MCF 10A (cell line): ENCODE measurements at regions of chr16 and their contacts with region 1.

Region 1: DNA sequence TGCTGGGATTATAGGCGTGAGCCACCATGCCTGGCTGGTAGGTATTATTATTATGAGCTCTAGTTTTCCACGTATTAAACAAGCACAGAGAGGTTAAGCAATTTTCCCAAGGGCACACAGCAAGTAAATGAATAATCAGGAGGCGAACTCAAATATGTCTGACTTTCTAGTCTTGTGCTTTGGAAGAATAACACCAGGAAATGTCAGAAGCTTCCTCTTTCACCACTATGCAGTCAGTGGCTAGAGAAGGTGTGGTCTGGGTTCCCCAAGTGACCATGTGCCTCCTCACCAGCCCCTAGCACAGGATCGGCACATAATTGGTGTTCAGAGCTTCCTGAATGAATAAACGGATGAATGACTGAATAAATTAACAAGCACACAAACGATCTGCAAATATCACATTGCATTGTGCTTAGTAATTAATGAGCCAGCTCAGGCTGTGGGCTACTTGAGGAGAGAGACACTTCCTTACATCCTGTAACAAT is 21.6 kb upstream of the SCNN1B start:
- DNase-seq: no peak
- H3K4me3 Mint-ChIP-seq: no peak overlapping the region
- H3K27ac Mint-ChIP-seq: no peak overlapping the region
- H3K4me1 Mint-ChIP-seq: peaks cover 37% of the 10 kb centered on the region
- H3K27me3 Mint-ChIP-seq: no peaks in the 10 kb centered on the region
- CTCF ChIP-seq: no peak

Region 2: DNA sequence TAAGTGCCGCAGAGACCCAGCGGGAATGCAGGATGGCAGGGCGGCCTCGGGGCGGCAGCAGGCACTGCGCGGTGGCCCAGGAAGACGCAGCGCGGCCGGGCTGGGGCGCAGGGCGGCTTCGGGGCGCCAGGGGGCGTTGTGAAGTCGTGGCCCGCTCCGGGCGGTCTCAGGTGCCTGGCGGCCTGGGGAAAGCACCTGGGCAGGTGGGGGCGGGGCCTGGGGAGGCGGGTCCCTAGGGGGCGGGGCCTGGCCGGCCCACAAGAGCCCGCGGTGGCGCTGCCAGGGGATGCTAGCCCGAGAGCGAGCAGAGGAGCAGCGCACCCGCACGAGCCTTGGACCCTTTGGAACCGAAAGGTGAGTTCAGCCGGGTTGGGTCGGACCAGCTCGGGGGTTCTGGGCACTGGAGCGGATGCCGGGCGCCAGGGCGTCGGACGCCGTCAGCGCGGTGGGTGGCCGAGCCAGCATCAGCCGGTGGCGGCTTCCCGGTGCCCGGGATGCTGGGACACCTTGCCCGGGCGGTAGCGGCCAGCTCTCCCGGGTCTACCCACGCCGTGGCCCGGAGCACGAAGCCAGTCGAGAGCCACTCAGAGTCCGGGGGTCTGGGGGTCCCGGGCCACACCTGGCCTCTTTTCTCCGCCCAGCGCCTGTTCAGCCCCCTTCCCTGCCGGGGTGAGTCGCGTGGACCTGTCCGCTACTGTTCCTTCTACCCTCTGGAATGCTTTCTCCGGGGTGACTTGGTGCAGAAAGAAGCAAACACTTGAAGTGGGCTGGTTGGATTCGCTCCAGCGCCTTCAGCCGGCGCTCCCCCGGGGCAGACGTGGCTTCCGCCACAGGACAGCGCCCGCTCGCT is 97.8 kb before region 1 on chr16 and contains the start of gene SCNN1G:
- CTCF ChIA-PET with region 1: interaction called, 4 read pairs
- POLR2A ChIA-PET with region 1: interaction called, 36 read pairs
- intact Hi-C with region 1: no loop called
- DNase-seq: peak; percentile 89
- H3K4me3 Mint-ChIP-seq: peak within 1 kb of the TSS; percentile 84
- H3K27ac Mint-ChIP-seq: peak within 1 kb of the TSS; percentile 35
- H3K4me1 Mint-ChIP-seq: peaks cover 24% of the 10 kb centered on the region
- H3K27me3 Mint-ChIP-seq: no peaks in the 10 kb centered on the region
- CTCF ChIP-seq: peak; percentile 99
- total RNA-seq, gene SCNN1G: 7.9 and 11.9 TPM in 2 replicates

Region 3: GRCh38 chr16:23248261-23249194 is 32.0 kb before region 1 on chr16:
- CTCF ChIA-PET with region 1: interaction called, 3 read pairs
- POLR2A ChIA-PET with region 1: interaction called, 204 read pairs
- intact Hi-C with region 1: no loop called
- DNase-seq: peak; percentile 91
- H3K4me3 Mint-ChIP-seq: peak overlapping the region; percentile 55
- H3K27ac Mint-ChIP-seq: peak overlapping the region; percentile 82
- H3K4me1 Mint-ChIP-seq: peaks cover 9% of the 10 kb centered on the region
- H3K27me3 Mint-ChIP-seq: no peaks in the 10 kb centered on the region
- CTCF ChIP-seq: no peak

Region 4: GRCh38 chr16:23266015-23266414 is 14.5 kb before region 1 on chr16:
- CTCF ChIA-PET with region 1: interaction called, 3 read pairs
- POLR2A ChIA-PET with region 1: interaction called, 204 read pairs
- intact Hi-C with region 1: no loop called
- DNase-seq: no peak
- H3K4me3 Mint-ChIP-seq: no peak overlapping the region
- H3K27ac Mint-ChIP-seq: no peak overlapping the region
- H3K4me1 Mint-ChIP-seq: peaks cover 22% of the 10 kb centered on the region
- H3K27me3 Mint-ChIP-seq: no peaks in the 10 kb centered on the region
- CTCF ChIP-seq: no peak

Region 5: GRCh38 chr16:23302045-23302956 is 21.8 kb after region 1 on chr16 and contains the start of gene SCNN1B:
- CTCF ChIA-PET with region 1: interaction called, 6 read pairs
- POLR2A ChIA-PET with region 1: interaction called, 13 read pairs
- intact Hi-C with region 1: no loop called
- DNase-seq: no peak
- H3K4me3 Mint-ChIP-seq: peak within 1 kb of the TSS; percentile 74
- H3K27ac Mint-ChIP-seq: no peak within 1 kb of the TSS
- H3K4me1 Mint-ChIP-seq: peaks cover 20% of the 10 kb centered on the region
- H3K27me3 Mint-ChIP-seq: no peaks in the 10 kb centered on the region
- CTCF ChIP-seq: no peak
- total RNA-seq, gene SCNN1B: 9.5 and 12.5 TPM in 2 replicates

Region 6: GRCh38 chr16:23362460-23363317 is 82.2 kb after region 1 on chr16:
- CTCF ChIA-PET with region 1: no interaction called
- POLR2A ChIA-PET with region 1: interaction called, 14 read pairs
- intact Hi-C with region 1: no loop called
- DNase-seq: peak; percentile 95
- H3K4me3 Mint-ChIP-seq: no peak overlapping the region
- H3K27ac Mint-ChIP-seq: peak overlapping the region; percentile 68
- H3K4me1 Mint-ChIP-seq: peaks cover 41% of the 10 kb centered on the region
- H3K27me3 Mint-ChIP-seq: no peaks in the 10 kb centered on the region
- CTCF ChIP-seq: no peak

Region 7: DNA sequence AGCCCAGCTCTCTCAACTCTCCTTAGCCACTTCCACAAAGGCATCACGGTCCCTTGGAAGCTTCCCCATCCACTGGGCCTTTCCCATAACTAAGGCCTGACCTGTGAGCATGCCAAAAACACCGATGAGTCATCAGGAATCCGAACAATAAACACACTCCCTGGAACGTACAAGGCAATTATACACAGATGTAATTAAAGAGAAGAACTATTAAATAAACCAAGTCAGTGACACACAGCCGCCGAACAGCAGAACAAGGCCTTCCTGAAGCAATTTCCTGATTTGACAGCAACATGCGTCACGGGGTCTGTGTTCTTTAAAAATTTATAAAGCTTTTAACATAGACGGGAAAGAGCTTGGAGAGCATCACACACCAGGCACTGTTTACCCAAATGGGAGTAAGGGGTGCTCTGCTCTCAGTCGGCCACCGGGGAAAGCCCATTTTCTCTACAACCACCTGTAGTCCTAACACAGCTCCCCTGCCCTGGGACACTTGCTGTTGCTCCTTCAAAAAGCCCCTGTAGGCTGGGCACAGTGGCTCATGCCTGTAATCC is 143.0 kb after region 1 on chr16:
- CTCF ChIA-PET with region 1: interaction called, 5 read pairs
- POLR2A ChIA-PET with region 1: interaction called, 69 read pairs
- intact Hi-C with region 1: no loop called
- DNase-seq: peak; percentile 99
- H3K4me3 Mint-ChIP-seq: peak overlapping the region; percentile 54
- H3K27ac Mint-ChIP-seq: peak overlapping the region; percentile 81
- H3K4me1 Mint-ChIP-seq: peaks cover 23% of the 10 kb centered on the region
- H3K27me3 Mint-ChIP-seq: no peaks in the 10 kb centered on the region
- CTCF ChIP-seq: no peak